CD4-positive, alpha-beta T cell (primary cell): ENCODE measurements at regions of chr2 and their contacts with region 1.

Region 1: GRCh38 chr2:106104332-106105062 is 89.6 kb downstream of the UXS1 start:
- DNase-seq: peak; percentile 40 to 85 (median 58)
- ATAC-seq: peak; percentile 80
- H3K4me3 ChIP-seq: no peak overlapping the region
- H3K4me3 Mint-ChIP-seq: no peak overlapping the region
- H3K27ac ChIP-seq: no peak overlapping the region
- H3K27ac Mint-ChIP-seq: peak overlapping the region; percentile 55
- H3K4me1 ChIP-seq: no peaks in the 10 kb centered on the region
- H3K4me1 Mint-ChIP-seq: peaks cover 9% of the 10 kb centered on the region
- H3K27me3 ChIP-seq: no peaks in the 10 kb centered on the region
- H3K27me3 Mint-ChIP-seq: no peaks in the 10 kb centered on the region
- CTCF ChIP-seq: peak; percentile 97

Region 2: GRCh38 chr2:106582148-106583143 is 477.9 kb after region 1 on chr2:
- CTCF ChIA-PET with region 1: no interaction called
- POLR2A ChIA-PET with region 1: no interaction called
- intact Hi-C with region 1: loop called (anchors 2 kb)
- DNase-seq: peak; percentile 31 to 76 (median 51)
- ATAC-seq: peak; percentile 88
- H3K4me3 ChIP-seq: peak overlapping the region; percentile 58
- H3K4me3 Mint-ChIP-seq: peak overlapping the region; percentile 91
- H3K27ac ChIP-seq: no peak overlapping the region
- H3K27ac Mint-ChIP-seq: no peak overlapping the region
- H3K4me1 ChIP-seq: peaks cover 10% of the 10 kb centered on the region
- H3K4me1 Mint-ChIP-seq: peaks cover 22% of the 10 kb centered on the region
- H3K27me3 ChIP-seq: peaks cover 17% of the 10 kb centered on the region in 2 experiments
- H3K27me3 Mint-ChIP-seq: peaks cover 57% of the 10 kb centered on the region
- CTCF ChIP-seq: peak; percentile 95